Activated B cell treated with CpG ODN at 0.5 μM for 24 hours (primary cell): ENCODE measurements at regions of chr5 and their contacts with region 1.

Region 1: DNA sequence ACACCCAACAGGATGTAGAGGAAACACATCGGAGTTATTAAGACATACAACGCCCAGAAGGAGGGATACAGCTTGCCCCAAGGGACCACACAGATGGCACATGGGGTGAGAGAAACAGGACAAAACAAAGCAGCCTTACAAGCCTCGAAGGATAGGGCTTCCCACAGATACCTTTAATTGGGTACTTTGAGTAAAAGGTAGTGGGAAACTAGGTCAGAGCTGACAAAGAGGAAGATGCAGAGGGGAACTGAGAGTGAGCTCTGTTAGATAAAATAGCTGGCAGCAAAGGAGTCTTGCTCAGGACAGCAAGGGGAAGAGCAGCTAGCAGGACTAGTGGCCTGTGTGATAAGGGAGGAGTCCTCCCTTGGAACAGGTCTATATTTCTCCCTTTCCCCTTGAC is 48.2 kb downstream of the OTP start:
- DNase-seq: peak; percentile 17
- ATAC-seq: peak; percentile 57
- H3K4me3 Mint-ChIP-seq: peak overlapping the region; percentile 1
- H3K27ac Mint-ChIP-seq: no peak overlapping the region
- H3K4me1 Mint-ChIP-seq: peaks cover 13% of the 10 kb centered on the region
- H3K27me3 Mint-ChIP-seq: peaks cover 4% of the 10 kb centered on the region
- CTCF ChIP-seq: no peak

Region 2: GRCh38 chr5:77449277-77449676 is 141.1 kb before region 1 on chr5:
- CTCF ChIA-PET with region 1: no interaction called
- POLR2A ChIA-PET with region 1: no interaction called
- intact Hi-C with region 1: no loop called
- DNase-seq: no peak
- ATAC-seq: no peak
- H3K4me3 Mint-ChIP-seq: no peak overlapping the region
- H3K27ac Mint-ChIP-seq: no peak overlapping the region
- H3K4me1 Mint-ChIP-seq: no peaks in the 10 kb centered on the region
- H3K27me3 Mint-ChIP-seq: no peaks in the 10 kb centered on the region
- CTCF ChIP-seq: no peak

Region 3: GRCh38 chr5:77486344-77486962 is 103.9 kb before region 1 on chr5:
- CTCF ChIA-PET with region 1: no interaction called
- POLR2A ChIA-PET with region 1: interaction called, 15 read pairs
- intact Hi-C with region 1: no loop called
- DNase-seq: no peak
- ATAC-seq: no peak
- H3K4me3 Mint-ChIP-seq: no peak overlapping the region
- H3K27ac Mint-ChIP-seq: no peak overlapping the region
- H3K4me1 Mint-ChIP-seq: peaks cover 11% of the 10 kb centered on the region
- H3K27me3 Mint-ChIP-seq: no peaks in the 10 kb centered on the region
- CTCF ChIP-seq: no peak